ENCODE measurements at regions of chr17 and their contacts with region 1.

Region 1: DNA sequence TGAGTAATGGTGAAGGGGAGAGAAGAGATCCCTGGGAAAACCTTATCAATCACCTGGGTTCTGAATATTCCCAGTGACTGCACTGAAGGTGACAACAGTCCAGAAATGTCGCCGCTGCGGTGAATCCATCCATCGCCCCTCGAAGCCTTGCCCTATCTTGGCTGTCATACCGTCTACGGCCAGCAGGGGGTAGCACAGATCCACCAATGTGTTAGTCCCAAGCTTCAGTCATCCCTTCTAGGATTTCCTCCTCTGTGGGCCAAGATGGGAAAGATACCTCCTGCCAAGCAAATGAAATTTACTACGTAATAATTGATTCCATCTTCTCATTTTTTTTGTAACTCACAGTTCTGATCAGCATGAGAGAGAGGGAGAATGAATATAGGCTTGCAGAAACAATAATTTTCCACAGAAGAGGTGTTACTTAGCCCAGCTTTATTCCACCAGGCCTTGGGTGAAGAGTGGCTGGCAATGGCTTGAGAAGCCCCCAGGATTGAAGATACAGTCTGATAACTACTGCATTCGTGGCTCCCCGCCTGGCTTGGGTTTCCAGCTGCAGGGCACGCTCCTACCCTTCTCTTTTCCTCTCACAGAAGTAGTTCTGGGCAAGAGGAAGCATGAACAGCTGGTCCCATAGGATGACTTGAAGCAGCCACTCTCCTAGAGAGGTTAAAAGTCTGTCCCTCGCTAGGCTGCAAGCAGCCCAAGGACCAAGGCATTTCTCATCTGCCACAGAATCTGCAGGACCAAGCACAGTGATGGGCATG is 2.6 kb upstream of the FMNL1 start:
- DNase-seq: peak; percentile 74 to 85 (median 77)
- ATAC-seq: peak; percentile 76
- H3K4me3 ChIP-seq: no peak overlapping the region
- H3K27ac ChIP-seq: no peak overlapping the region
- H3K4me1 ChIP-seq: peaks cover 16 to 33% of the 10 kb centered on the region in 2 experiments; a peak in 4 of 5 replicates
- H3K27me3 ChIP-seq: no peaks in the 10 kb centered on the region
- CTCF ChIP-seq: peak; percentile 92 to 96 (median 96)
- EP300 ChIP-seq: no peak
- POLR2A ChIP-seq: no peak
- RAD21 ChIP-seq: peak; percentile 92 to 98

Region 2: DNA sequence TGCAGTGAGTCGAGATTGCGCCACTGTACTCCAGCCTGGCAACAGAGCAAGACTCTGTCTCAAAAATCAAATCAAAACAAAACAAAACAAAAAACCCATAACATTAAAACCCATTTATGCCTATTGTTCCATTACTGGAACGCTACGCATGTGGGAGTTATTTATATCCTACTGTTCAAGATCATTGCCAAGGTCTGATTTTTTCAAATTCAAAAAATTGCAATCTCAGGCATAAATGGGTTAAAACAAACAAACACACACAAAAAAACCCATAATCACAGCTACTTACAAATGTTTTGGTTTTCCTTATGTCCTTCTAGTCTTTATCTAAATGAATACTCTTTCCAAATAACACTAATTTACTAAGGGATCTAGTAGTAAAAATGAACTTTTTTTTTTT is 406.8 kb before region 1 on chr17:
- CTCF ChIA-PET with region 1: no interaction called
- POLR2A ChIA-PET with region 1: no interaction called
- in situ Hi-C with region 1: no loop called
- intact Hi-C with region 1: no loop called
- DNase-seq: no peak
- ATAC-seq: no peak
- H3K4me3 ChIP-seq: no peak overlapping the region
- H3K27ac ChIP-seq: no peak overlapping the region
- H3K4me1 ChIP-seq: no peaks in the 10 kb centered on the region
- H3K27me3 ChIP-seq: peaks cover 30 to 58% of the 10 kb centered on the region in 2 experiments
- CTCF ChIP-seq: no peak
- EP300 ChIP-seq: no peak
- POLR2A ChIP-seq: no peak
- RAD21 ChIP-seq: no peak

Region 3: DNA sequence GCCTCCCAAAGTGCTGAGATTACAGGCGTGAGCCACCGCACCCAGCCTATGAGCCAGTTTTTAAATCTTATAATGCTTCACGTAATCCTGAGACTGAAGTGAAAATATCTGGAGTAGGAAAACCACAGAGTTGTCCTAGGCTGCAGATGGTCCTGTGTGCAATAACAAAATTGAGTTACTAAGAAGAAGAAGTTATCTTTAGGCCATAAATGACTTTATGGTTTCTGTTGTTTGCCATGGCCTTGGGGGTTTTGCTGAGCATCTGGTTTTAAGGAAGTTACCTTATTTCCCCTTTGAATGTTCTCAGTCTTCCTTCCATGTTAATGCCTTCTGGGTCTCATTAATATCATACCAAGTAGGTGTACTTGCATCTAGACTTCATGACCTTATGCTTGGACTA is 141.4 kb before region 1 on chr17:
- CTCF ChIA-PET with region 1: no interaction called
- POLR2A ChIA-PET with region 1: no interaction called
- in situ Hi-C with region 1: no loop called
- intact Hi-C with region 1: no loop called
- DNase-seq: no peak
- ATAC-seq: no peak
- H3K4me3 ChIP-seq: no peak overlapping the region
- H3K27ac ChIP-seq: no peak overlapping the region
- H3K4me1 ChIP-seq: peaks cover 0 to 5% of the 10 kb centered on the region in 2 experiments; a peak in 1 of 5 replicates
- H3K27me3 ChIP-seq: no peaks in the 10 kb centered on the region
- CTCF ChIP-seq: no peak
- EP300 ChIP-seq: no peak
- POLR2A ChIP-seq: no peak
- RAD21 ChIP-seq: no peak

Region 4: DNA sequence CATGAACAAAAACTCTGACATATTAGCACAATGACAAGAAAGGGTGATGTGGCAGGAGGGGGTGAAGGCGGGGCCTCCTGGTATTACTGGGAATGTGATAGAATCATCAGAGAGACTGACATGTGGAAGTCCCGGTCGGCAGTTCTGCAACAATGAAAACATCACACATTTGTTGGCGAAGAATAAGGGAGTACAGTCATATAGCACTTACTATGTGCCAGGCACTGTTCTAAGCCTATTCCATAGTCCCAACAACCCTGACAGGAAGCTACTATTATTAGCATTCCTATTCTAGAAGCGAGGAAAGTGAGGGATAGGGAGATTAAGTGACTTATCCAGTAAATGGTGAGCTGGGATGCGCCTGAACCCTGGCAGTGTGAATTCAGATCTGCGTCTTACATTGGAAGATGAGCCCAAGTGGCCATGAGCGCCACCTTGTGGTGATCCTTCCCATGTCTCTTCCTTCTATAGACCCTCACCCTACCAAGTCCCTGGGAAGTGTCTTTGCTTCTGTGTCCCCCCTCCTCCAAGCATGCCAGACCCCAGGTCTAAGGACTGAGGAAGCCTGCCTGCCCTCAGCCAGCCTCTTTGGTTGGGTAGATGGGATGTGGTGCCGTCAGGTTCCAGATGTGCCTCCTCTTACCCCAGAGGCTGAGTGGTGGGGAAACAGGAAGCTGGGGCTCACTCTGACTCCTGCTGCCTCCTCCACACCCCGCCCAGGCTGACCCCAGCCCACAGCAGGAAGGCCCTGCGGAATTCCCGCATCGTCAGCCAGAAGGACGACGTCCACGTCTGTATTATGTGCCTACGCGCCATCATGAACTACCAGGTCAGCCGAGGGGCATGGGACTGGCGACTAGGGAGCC is 16.6 kb after region 1 on chr17:
- CTCF ChIA-PET with region 1: interaction called, 44 read pairs
- POLR2A ChIA-PET with region 1: interaction called, 3 read pairs
- in situ Hi-C with region 1: no loop called
- intact Hi-C with region 1: loop called (anchors 1 kb)
- DNase-seq: peak; percentile 68 to 85 (median 72)
- ATAC-seq: peak; percentile 86
- H3K4me3 ChIP-seq: no peak overlapping the region
- H3K27ac ChIP-seq: no peak overlapping the region
- H3K4me1 ChIP-seq: peaks cover 4 to 26% of the 10 kb centered on the region in 2 experiments; a peak in 3 of 5 replicates
- H3K27me3 ChIP-seq: no peaks in the 10 kb centered on the region
- CTCF ChIP-seq: peak; percentile 77 to 90 (median 82)
- EP300 ChIP-seq: no peak
- POLR2A ChIP-seq: no peak
- RAD21 ChIP-seq: peak; percentile 55 to 78; a peak in 3 of 4 replicates

Region 5: DNA sequence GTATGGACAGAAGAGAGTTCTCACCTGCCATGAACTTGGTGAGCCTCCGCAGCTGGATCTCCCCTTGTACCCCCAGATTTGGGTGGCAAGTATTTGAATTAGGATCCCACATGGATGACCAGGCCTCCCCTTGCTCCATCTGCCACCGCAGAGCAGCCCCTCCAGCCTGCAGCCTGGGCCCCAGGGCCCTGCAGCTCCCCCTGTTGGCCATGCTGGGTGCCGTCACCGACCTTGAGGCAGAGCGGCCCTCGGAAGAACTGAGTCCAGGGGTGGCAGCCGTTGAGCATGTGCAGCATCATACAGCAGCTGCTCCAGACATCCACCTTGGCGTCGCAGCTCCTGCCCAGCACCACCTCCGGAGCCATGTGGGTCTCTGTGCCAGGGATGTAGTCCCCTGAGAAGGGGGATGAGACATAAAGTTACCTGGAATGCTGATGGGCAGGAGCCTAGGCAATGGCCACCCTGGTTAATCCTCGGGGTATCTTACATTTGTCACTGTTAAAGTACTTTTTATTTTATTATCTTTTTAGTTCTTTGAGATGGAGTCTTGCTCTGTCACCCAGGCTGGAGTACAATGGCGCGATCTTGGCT is 51.8 kb after region 1 on chr17:
- CTCF ChIA-PET with region 1: interaction called, 20 read pairs
- POLR2A ChIA-PET with region 1: no interaction called
- in situ Hi-C with region 1: no loop called
- intact Hi-C with region 1: loop called (anchors 2 kb)
- DNase-seq: peak; percentile 65 to 79 (median 75)
- ATAC-seq: peak; percentile 99
- H3K4me3 ChIP-seq: no peak overlapping the region
- H3K27ac ChIP-seq: no peak overlapping the region
- H3K4me1 ChIP-seq: peaks cover 0 to 7% of the 10 kb centered on the region in 2 experiments; a peak in 1 of 5 replicates
- H3K27me3 ChIP-seq: no peaks in the 10 kb centered on the region
- CTCF ChIP-seq: peak; percentile 79 to 90 (median 90)
- EP300 ChIP-seq: no peak
- POLR2A ChIP-seq: no peak
- RAD21 ChIP-seq: peak; percentile 51 to 77

Region 6: DNA sequence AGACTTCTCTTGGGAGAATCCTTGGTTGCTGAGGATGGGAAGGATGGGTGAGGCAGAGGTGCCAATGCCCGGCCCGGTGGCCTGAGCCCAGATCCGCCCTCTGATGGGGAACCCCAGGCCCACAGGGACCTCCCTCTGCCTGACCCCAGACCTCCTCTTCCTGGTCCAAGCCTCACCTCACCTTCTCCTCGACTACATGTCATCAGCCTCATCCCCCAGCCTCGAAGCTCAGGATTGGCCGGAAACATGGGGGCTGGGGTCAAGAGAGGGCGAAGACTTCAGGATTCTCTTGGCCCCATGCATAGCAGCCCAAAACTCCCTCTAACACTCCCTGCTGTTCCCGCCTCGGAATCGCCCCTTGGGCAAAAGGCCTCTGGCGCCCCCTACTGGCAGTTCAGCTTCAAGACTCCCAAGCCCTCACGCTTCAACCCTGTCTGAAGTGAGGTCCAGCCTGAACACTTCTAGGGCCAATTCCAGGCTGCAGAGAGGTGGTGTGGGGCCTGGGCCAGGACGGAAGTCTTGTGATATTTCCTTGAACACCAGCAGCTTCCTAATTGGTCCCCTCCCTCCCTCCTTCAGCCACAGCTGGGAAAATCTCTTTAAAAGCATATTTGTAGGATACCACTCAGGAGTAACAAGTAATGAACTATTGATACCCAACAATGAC is 166.4 kb after region 1 on chr17:
- CTCF ChIA-PET with region 1: interaction called, 21 read pairs
- POLR2A ChIA-PET with region 1: no interaction called
- in situ Hi-C with region 1: loop called (anchors 5 kb)
- intact Hi-C with region 1: loop called (anchors 1 kb)
- DNase-seq: peak; percentile 85 to 92 (median 86)
- ATAC-seq: peak; percentile 99
- H3K4me3 ChIP-seq: no peak overlapping the region
- H3K27ac ChIP-seq: no peak overlapping the region
- H3K4me1 ChIP-seq: peaks cover 21 to 22% of the 10 kb centered on the region in 2 experiments
- H3K27me3 ChIP-seq: peaks cover 0 to 14% of the 10 kb centered on the region in 2 experiments; a peak in 3 of 5 replicates
- CTCF ChIP-seq: peak; percentile 96 to 99 (median 98)
- EP300 ChIP-seq: 0 out of 2 replicates have a peak, but pooled peaks have one; percentile 8
- POLR2A ChIP-seq: no peak
- RAD21 ChIP-seq: peak; percentile 99

Region 7: DNA sequence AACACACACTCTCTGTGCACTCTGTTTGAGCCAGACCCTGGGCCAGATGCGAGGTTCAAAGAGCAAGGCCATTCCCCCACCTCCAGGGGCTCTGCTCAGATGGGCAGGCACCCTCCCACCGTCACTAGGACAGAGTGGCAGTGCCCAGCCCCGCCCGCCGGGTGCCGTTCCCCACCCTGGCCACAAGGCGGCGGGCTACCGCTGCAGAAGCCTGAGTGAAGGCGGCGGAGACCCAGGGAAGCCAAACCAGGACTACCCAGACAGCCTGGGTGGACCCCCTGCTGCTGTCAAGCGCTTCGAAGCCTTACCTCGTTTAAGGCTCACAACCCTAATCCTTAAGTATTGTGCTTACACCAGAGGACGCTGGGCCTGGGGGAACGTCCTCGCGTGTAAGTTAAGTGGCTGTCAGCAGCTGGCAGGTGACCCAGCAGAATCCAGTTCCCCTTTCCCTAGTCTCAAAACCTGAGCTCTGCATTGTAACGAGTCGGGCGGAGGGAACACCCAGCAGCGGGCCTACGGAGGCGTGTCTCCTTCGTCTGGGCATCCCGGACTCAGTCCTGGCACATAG is 209.1 kb after region 1 on chr17:
- CTCF ChIA-PET with region 1: interaction called, 3 read pairs
- POLR2A ChIA-PET with region 1: no interaction called
- in situ Hi-C with region 1: no loop called
- intact Hi-C with region 1: loop called (anchors 1 kb)
- DNase-seq: peak; percentile 68 to 80 (median 80)
- ATAC-seq: peak; percentile 72
- H3K4me3 ChIP-seq: no peak overlapping the region
- H3K27ac ChIP-seq: no peak overlapping the region
- H3K4me1 ChIP-seq: peaks cover 8 to 54% of the 10 kb centered on the region in 2 experiments
- H3K27me3 ChIP-seq: no peaks in the 10 kb centered on the region
- CTCF ChIP-seq: peak; percentile 82 to 95 (median 89)
- EP300 ChIP-seq: no peak
- POLR2A ChIP-seq: no peak
- RAD21 ChIP-seq: peak; percentile 64 to 86